Activated CD4-positive, alpha-beta T cell treated with anti-CD3 and anti-CD28 coated beads for 36 hours (primary cell): ENCODE measurements at regions of chrX and their contacts with region 1.

Region 1: GRCh38 chrX:153470435-153471363 is at the start of gene HAUS7:
- DNase-seq: peak; percentile 93
- ATAC-seq: peak; percentile 91
- H3K4me3 Mint-ChIP-seq: peak within 1 kb of the TSS; percentile 78
- H3K27ac Mint-ChIP-seq: peak within 1 kb of the TSS; percentile 67
- H3K4me1 Mint-ChIP-seq: peaks cover 5% of the 10 kb centered on the region
- H3K27me3 Mint-ChIP-seq: no peaks in the 10 kb centered on the region
- total RNA-seq, gene HAUS7: 41.9 to 70.0 TPM

Region 2: DNA sequence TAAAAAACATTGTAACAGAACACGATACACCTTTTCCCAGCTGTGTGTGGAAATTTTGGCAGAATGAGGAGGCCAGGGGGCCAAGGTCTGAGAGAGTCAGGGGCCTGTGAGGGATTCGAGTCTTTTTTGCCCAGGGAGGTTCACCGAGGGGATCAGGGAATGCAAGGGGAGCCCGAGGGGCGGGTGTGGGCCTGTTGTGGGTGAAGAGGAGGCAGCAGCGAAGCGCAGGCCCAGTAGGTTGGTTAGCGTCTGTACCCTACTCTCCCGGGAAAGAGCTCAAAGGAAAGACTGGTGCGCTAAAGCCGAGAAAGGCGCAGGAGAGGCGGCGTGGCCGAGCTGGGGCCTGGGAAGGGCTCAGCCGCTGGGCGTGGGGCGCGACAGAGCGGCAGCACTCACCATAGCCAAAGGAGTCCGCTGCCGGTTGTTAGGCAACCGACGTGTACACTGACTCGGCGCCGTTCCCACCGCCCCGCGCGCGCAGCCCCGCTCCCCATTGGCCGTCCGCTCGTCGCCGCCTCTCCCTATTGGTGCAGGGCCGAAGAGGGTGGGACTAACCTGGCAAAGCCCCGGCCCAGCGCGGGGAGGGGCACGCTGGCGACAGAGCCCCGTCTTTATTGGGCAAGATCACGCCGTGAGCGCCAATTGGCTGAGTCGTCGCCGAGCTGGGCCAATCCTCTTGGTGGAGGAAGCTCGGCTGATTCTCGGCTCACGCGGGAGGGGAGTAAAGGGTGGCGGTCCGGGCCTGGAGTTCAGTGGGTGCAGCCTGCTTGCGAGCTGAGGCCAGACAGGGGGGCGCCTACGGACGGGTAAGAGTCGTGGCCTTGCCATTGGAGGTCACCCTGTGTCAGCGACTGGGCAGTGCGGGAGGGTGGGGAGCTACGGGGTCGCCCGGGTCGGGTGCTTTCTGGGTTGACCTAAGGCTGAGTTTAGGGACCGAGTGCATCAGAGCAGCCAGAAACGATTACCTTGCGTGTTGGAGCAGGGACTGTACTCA is 640.1 kb before region 1 on chrX and contains the starts of genes CETN2 and NSDHL:
- CTCF ChIA-PET with region 1: no interaction called
- POLR2A ChIA-PET with region 1: no interaction called
- intact Hi-C with region 1: loop called in 1 of 2 experiments (anchors 1 kb)
- DNase-seq: peak; percentile 96
- ATAC-seq: peak; percentile 99
- H3K4me3 Mint-ChIP-seq: peak within 1 kb of the TSS; percentile 83
- H3K27ac Mint-ChIP-seq: peak within 1 kb of the TSS; percentile 78
- H3K4me1 Mint-ChIP-seq: peaks cover 19% of the 10 kb centered on the region
- H3K27me3 Mint-ChIP-seq: no peaks in the 10 kb centered on the region
- total RNA-seq, gene CETN2: 11.2 to 13.1 TPM
- total RNA-seq, gene NSDHL: 20.0 to 20.6 TPM

Region 3: DNA sequence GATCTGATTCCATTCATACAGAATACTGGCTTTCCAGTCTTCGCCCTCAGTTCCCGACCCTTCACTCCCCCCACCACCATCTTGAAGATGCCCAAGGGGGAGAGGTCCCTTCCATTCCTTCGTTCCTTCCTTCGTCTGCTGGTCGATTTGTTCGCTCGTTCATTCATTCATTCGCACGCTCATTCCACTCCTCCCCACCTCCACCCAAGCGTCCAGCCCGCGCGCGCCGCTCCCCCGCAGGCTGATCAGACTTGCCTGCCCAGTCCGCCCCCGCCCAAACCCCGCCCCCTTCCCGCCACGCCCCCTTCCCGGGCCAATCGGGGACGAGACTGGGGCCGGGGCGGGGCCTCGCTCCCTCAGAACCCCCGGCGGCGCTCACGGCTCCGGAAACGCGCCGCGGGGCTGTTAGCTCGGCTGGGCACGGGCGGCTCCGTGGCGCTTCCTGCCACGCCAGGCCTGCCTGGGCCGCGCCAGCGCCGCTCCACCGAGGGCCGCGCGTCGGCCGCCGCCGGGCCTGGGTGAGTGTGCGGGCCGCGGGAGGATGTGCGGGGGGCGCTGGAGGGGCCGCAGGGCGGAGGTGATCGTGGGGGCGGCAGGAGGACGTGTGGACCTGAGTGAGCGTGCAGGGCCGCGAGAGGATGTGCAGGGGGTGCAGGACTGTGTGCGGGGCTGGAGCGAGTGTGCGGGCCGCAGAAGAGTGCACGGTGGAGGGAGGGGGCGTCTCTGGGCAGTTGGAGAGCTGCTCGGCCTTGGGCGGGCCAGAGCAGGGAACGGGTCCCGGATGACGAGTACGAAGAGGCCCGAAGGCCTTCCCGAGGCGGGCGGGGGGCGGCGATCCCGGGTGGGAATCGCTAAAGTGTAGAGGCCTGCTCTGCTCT is 136.7 kb before region 1 on chrX and contains the start of gene ZNF275:
- CTCF ChIA-PET with region 1: no interaction called
- POLR2A ChIA-PET with region 1: no interaction called
- intact Hi-C with region 1: loop called in 1 of 2 experiments (anchors 1 kb)
- DNase-seq: peak; percentile 87
- ATAC-seq: peak; percentile 93
- H3K4me3 Mint-ChIP-seq: peak within 1 kb of the TSS; percentile 80
- H3K27ac Mint-ChIP-seq: peak within 1 kb of the TSS; percentile 81
- H3K4me1 Mint-ChIP-seq: peaks cover 45% of the 10 kb centered on the region
- H3K27me3 Mint-ChIP-seq: no peaks in the 10 kb centered on the region
- total RNA-seq, gene ZNF275: 11.5 to 13.4 TPM

Region 4: DNA sequence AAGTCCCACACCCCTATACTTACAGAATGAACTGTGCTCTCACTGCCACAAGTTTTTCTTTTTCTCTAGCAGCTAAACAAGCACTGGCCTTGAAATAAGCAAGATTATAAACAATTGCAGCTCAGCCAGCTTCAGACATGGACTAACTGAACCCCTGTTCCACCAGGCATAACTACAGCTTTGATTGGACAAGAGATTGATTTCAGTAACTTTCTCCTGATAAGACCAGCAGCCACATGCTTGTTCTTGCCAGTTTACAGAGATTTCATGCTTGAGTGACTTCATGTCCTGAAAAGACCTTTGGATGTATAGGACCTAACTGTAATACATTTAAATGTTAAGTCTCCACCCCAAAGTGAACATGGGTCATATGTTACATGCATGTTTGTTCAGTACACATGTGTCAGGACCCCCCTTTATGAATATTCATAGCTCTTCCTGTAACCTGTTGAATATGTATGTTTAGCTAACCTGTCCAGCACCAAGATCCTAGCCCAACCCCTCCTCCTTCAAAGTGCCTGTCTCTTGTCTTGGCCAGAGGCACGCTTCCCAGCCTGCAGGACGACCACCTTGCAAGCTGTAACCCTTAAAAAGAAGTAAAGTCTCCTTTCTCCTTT is 108.8 kb before region 1 on chrX:
- CTCF ChIA-PET with region 1: no interaction called
- POLR2A ChIA-PET with region 1: no interaction called
- intact Hi-C with region 1: no loop called
- DNase-seq: no peak
- ATAC-seq: no peak
- H3K4me3 Mint-ChIP-seq: no peak overlapping the region
- H3K27ac Mint-ChIP-seq: no peak overlapping the region
- H3K4me1 Mint-ChIP-seq: no peaks in the 10 kb centered on the region
- H3K27me3 Mint-ChIP-seq: no peaks in the 10 kb centered on the region

Region 5: DNA sequence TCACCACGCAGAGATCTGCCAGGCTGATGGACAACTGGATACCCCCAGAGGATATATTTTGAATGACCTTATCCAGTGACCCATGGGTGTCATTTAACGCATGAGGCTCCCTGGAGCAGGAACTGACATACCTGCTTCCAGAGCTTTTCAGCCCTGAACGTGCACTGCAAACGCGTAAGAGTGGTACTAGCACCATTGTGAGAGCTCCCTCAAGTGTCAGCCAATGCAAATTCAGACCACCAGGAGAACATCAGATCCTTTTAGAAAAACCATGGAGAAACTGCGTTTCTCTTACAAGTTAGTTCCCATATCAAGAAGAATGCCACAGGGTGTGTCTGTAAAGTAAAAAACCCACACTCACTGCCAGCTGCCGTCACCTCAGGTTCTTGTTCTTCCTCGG is 32.2 kb before region 1 on chrX:
- CTCF ChIA-PET with region 1: no interaction called
- POLR2A ChIA-PET with region 1: no interaction called
- intact Hi-C with region 1: no loop called
- DNase-seq: no peak
- ATAC-seq: no peak
- H3K4me3 Mint-ChIP-seq: no peak overlapping the region
- H3K27ac Mint-ChIP-seq: no peak overlapping the region
- H3K4me1 Mint-ChIP-seq: no peaks in the 10 kb centered on the region
- H3K27me3 Mint-ChIP-seq: peaks cover 3% of the 10 kb centered on the region

Region 6: DNA sequence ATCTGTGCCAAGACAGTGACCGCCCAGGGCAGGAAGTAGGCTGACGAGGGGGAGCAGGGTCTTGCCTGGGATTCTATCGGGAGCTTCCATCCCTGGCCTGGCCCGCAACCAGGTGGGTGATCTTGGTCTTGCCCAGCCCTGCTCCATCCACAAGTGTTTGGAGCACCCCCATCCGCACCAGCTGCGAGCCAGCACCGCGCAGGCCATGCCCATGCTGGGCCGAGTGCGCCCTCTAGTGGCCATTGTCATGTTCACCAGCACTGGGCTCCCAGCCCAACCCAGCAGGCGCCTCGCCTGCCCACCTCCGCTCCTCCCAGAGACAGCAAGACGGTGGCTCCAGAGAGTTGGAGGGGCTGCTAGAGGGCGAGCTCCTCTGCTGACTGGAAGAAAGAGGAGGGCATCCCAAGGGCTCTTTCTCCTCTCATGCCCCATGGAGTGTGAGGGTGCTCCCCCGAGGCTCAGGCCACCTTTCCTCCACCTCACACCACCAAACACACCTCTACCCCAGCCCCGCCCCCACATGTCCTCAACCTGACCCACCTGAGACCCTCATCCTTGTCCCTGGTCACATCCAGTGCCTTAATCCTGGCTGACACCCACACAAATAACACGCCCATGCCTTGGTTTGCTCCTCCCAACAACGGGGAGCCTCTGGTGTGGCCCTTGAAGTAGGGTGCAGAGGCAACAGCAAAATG is 36.9 kb after region 1 on chrX:
- CTCF ChIA-PET with region 1: interaction called, 20 read pairs
- POLR2A ChIA-PET with region 1: no interaction called
- intact Hi-C with region 1: loop called (anchors 1 kb)
- DNase-seq: peak; percentile 89
- ATAC-seq: peak; percentile 100
- H3K4me3 Mint-ChIP-seq: no peak overlapping the region
- H3K27ac Mint-ChIP-seq: no peak overlapping the region
- H3K4me1 Mint-ChIP-seq: no peaks in the 10 kb centered on the region
- H3K27me3 Mint-ChIP-seq: no peaks in the 10 kb centered on the region

Region 7: DNA sequence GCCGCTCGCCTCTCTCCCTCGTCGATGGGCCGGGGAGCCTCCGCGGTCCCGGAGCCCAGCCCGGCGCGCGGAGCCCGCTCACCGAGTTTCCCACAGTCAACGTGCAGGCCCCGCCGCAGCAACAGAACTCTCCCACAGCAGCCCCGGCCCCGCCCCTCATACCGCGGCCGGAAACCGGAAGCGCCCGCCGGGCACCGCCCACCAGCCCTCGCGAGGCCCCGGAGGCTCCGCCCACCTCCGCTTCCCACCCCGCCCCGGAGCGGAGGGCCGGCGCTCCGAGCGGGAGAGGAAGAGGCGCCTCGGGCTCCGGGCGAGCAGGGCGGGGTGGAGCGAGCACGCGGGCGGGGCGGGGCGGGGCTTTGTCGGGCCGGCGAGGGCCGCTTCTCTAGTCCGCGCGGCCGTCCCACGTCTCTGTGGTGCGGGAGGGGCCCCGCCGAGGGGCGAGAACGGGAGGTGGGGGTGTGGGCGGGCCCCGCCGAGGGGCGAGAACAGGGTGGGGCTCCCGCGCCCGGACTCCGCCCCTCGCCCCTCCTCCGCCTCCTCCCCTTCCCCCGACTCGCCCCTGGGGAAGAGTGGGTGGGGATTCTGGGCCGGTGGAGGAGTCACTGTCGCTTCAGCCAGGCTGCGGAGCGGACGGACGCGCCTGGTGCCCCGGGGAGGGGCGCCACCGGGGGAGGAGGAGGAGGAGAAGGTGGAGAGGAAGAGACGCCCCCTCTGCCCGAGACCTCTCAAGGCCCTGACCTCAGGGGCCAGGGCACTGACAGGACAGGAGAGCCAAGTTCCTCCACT is 253.7 kb after region 1 on chrX and contains the starts of genes ABCD1 and BCAP31:
- CTCF ChIA-PET with region 1: no interaction called
- POLR2A ChIA-PET with region 1: no interaction called
- intact Hi-C with region 1: loop called (anchors 1 to 5 kb)
- DNase-seq: peak; percentile 93
- ATAC-seq: peak; percentile 84
- H3K4me3 Mint-ChIP-seq: peak within 1 kb of the TSS; percentile 89
- H3K27ac Mint-ChIP-seq: peak within 1 kb of the TSS; percentile 87
- H3K4me1 Mint-ChIP-seq: peaks cover 20% of the 10 kb centered on the region
- H3K27me3 Mint-ChIP-seq: no peaks in the 10 kb centered on the region
- total RNA-seq, gene ABCD1: 4.5 to 4.8 TPM
- total RNA-seq, gene BCAP31: 78.0 to 106 TPM